Panc1 (cell line): ENCODE measurements at regions of chr1 and their contacts with region 1.

Region 1: DNA sequence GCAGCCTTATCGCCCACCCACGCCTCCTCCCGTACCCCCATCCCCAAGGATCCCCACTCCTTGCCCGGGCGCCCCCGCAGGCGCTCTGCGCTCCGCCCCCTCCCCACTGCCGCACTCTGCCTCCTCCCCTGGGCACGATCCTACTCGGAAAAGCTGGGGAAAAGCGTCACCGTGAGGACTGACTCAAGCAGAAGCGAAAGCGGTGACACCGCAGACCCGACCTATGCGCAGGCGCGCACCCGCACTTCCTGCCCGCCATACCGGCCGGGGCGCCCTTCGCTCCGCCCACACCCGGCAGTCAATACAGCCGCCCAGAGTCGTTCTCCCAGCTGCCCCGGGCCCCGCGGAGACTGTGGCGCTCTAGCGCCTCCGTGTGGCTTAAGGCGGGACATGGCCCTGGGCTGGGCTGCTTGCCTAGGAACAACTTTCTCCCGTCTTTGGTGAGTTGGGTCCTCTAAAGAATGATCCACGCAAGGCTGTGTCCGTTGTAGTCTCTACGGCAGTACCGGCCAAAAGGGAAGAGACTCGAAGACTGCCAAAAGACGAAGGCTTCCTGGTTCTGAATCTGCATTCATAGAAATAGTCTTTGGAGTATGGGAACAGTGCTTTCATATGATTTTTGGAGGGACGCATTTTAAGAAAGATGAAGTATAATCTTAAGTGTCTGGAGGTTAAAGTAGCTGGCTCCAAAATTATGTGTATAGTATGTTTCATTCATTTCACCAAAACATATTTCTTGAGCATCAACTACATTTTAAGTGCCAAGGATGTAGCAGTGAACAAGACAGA is at the start of gene OMA1:
- DNase-seq: peak; percentile 88
- ATAC-seq: peak; percentile 99
- H3K4me3 ChIP-seq: peak within 1 kb of the TSS; percentile 77 to 93
- H3K27ac ChIP-seq: peak within 1 kb of the TSS; percentile 94
- H3K4me1 ChIP-seq: peaks cover 7% of the 10 kb centered on the region
- H3K27me3 ChIP-seq: no peaks in the 10 kb centered on the region; the same call in 1 of the 2 replicates
- CTCF ChIP-seq: peak; percentile 97
- total RNA-seq, gene OMA1: 16.6 TPM

Region 2: GRCh38 chr1:57844382-57844980 is 702.2 kb before region 1 on chr1:
- CTCF ChIA-PET with region 1: no interaction called
- POLR2A ChIA-PET with region 1: interaction called, 15 read pairs
- in situ Hi-C with region 1: no loop called
- intact Hi-C with region 1: no loop called
- DNase-seq: no peak
- ATAC-seq: no peak
- H3K4me3 ChIP-seq: no peak overlapping the region
- H3K27ac ChIP-seq: no peak overlapping the region
- H3K4me1 ChIP-seq: no peaks in the 10 kb centered on the region
- H3K27me3 ChIP-seq: no peaks in the 10 kb centered on the region
- CTCF ChIP-seq: no peak

Region 3: DNA sequence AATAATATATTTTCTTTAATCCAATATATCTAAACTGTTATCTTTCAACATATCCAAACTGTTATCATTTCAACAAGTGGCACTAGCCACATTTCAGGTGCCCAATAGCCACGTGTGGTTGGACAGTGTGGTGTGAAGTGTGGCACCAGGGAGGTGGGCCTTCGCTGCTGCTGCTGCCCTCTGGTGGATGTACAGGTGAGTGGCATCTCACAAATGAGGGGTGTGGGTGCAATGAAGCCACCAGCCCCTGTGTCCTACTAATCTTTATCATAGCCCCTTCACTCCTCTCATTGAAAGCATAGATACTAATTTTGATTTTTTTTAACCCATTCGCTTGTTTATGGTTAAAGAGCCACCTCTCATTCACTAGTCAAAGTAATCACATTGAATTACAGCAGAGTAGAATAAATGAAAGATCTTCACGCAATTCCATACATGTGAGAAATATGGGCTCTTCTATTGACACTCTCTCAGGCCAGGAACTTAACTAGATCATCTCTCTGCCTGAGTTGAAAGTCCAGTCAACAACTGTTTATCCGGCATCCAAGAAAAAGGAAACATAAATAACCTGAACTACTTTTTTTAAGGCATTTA is 499.4 kb before region 1 on chr1:
- CTCF ChIA-PET with region 1: no interaction called
- POLR2A ChIA-PET with region 1: interaction called, 10 read pairs
- in situ Hi-C with region 1: no loop called
- intact Hi-C with region 1: no loop called
- DNase-seq: no peak
- ATAC-seq: peak; percentile 84
- H3K4me3 ChIP-seq: no peak overlapping the region
- H3K27ac ChIP-seq: no peak overlapping the region
- H3K4me1 ChIP-seq: no peaks in the 10 kb centered on the region
- H3K27me3 ChIP-seq: peaks cover 2% of the 10 kb centered on the region; the same call in 1 of the 2 replicates
- CTCF ChIP-seq: peak; percentile 89

Region 4: DNA sequence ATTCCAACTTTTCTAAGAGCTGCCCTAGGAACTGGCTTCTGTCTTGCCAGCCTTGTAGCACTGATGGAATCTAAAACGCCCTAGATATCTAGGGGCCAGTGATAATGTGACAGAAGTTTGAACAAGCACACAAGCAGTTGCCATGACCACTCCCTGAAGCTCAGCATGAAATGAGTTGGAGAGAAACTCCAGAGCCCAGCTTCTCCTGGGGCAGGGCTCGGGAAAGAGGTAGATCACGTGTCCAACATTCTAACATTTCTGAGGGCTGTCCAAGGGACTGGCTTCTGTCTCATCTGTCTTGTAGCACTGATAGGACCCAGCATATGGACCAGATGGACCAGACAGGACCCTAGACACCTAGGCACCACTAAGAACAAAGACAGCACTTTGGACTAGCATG is 38.1 kb before region 1 on chr1:
- CTCF ChIA-PET with region 1: no interaction called
- POLR2A ChIA-PET with region 1: no interaction called
- in situ Hi-C with region 1: no loop called
- intact Hi-C with region 1: no loop called
- DNase-seq: no peak
- ATAC-seq: no peak
- H3K4me3 ChIP-seq: no peak overlapping the region
- H3K27ac ChIP-seq: no peak overlapping the region
- H3K4me1 ChIP-seq: no peaks in the 10 kb centered on the region
- H3K27me3 ChIP-seq: no peaks in the 10 kb centered on the region
- CTCF ChIP-seq: no peak